A549 (cell line): ENCODE measurements at regions of chr18 and their contacts with region 1.

Region 1: GRCh38 chr18:61502472-61502871 is 169.2 kb downstream of the CDH20 start:
- DNase-seq: peak; percentile 17 to 38
- ATAC-seq: peak; percentile 66 to 74; a peak in 4 of 6 replicates
- H3K4me3 ChIP-seq: no peak overlapping the region
- H3K27ac ChIP-seq: no peak overlapping the region
- H3K4me1 ChIP-seq: no peaks in the 10 kb centered on the region
- CTCF ChIP-seq: peak; percentile 54
- EP300 ChIP-seq: no peak
- POLR2A ChIP-seq: no peak
- RAD21 ChIP-seq: peak; percentile 60 to 61

Region 2: DNA sequence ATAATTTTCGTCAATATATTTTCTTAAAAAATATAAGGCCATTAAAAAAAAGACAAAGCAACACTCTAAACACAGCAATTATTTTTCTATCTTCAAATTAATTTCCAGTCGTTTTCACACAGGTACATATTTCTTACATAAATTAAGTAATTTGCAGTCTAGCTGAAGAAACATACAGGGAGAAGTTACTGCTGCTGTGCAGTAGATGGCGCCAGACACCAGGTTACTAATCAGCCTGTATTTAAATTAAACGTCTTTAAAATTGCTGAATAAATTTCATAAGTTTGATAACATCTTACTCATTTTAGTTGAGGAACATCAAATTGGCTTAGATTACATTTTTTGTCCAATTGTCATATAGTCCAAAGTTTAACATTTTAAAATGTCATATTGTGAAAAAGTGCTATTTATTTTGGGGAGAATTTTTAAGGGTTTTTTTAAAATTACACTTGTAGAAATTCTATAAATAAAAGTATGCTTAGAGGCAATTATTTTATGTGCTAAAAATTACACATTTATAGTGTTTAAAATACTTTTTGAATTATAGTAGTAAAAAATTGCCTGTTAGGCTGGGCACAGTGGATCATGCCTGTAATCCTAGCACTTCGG is 1514.3 kb before region 1 on chr18:
- CTCF ChIA-PET with region 1: interaction called, 16 read pairs
- POLR2A ChIA-PET with region 1: no interaction called
- DNase-seq: peak; percentile 7 to 53
- ATAC-seq: no peak
- H3K4me3 ChIP-seq: no peak overlapping the region
- H3K27ac ChIP-seq: no peak overlapping the region
- H3K4me1 ChIP-seq: no peaks in the 10 kb centered on the region
- CTCF ChIP-seq: peak; percentile 91
- EP300 ChIP-seq: no peak
- POLR2A ChIP-seq: no peak
- RAD21 ChIP-seq: peak; percentile 88 to 90

Region 3: GRCh38 chr18:60684843-60685513 is 817.5 kb before region 1 on chr18:
- CTCF ChIA-PET with region 1: interaction called, 16 read pairs
- POLR2A ChIA-PET with region 1: no interaction called
- DNase-seq: peak in 1 of 2 experiments; percentile 8
- ATAC-seq: no peak
- H3K4me3 ChIP-seq: no peak overlapping the region
- H3K27ac ChIP-seq: no peak overlapping the region
- H3K4me1 ChIP-seq: no peaks in the 10 kb centered on the region
- CTCF ChIP-seq: peak; percentile 41; the same call in 2 of the 3 replicates
- EP300 ChIP-seq: no peak
- POLR2A ChIP-seq: no peak
- RAD21 ChIP-seq: peak; percentile 44 to 51